ENCODE measurements at regions of chr13 and their contacts with region 1.

Region 1: GRCh38 chr13:52652196-52652979 is at the start of gene SUGT1:
- ATAC-seq: peak; percentile 91 to 98 (median 97)
- H3K4me3 ChIP-seq: peak within 1 kb of the TSS; percentile 45 to 71 (median 54)
- H3K27ac ChIP-seq: peak within 1 kb of the TSS; percentile 99 to 100
- H3K4me1 ChIP-seq: peaks cover 10 to 17% of the 10 kb centered on the region in 2 donors
- total RNA-seq, gene SUGT1: 55.3 to 68.2 (median 62.3) TPM

Region 2: GRCh38 chr13:53137779-53138178 is 485.4 kb after region 1 on chr13:
- in situ Hi-C with region 1: no loop called
- ATAC-seq: peak in 1 of 8 experiments; percentile 56
- H3K4me3 ChIP-seq: no peak overlapping the region
- H3K27ac ChIP-seq: no peak overlapping the region
- H3K4me1 ChIP-seq: no peaks in the 10 kb centered on the region

Region 3: GRCh38 chr13:53191091-53191490 is 538.7 kb after region 1 on chr13:
- in situ Hi-C with region 1: loop called in 2 of 9 experiments (anchors 25 kb)
- ATAC-seq: peak in 1 of 8 experiments; percentile 43
- H3K4me3 ChIP-seq: no peak overlapping the region
- H3K27ac ChIP-seq: no peak overlapping the region
- H3K4me1 ChIP-seq: no peaks in the 10 kb centered on the region

Measured in motor neuron (in vitro differentiated cells).